ENCODE measurements at regions of chr2 and their contacts with region 1.

Region 1: DNA sequence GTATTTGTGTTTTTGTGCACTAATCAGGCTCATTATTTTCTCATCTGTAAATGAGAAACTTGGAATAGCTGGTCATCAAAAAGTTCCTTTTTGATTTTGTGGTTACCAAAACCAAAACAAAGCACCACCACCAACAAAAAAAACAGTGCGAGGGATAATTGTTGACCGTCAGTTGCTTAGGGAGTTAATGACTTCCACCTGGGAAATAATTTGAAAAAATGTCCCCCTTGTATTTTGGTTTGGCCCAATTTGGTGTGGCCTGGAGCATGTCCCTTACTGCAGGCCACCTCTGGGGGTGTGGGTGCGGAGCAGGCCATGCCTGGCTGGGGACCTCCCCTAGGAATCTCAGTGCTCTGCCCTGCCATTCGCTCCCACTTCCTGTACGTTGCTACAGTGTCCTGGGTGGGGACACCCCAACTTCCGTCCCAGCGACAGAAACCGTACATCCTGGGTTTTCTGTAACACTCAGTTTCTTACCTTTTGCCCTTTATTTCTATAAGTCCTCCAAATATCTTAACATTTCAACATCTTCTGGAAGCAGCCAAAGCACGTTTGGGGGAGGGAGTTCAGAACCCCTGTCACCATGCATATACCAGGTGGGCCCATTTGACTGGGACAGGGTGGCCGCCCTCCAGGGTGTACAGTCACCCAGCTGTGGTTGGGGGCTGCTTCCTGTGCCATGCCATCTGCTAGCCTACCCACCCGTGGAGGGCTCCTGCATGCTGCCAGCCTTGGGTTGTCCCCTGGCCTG is 31.3 kb downstream of the NCK2 start:
- DNase-seq: no peak
- H3K4me3 Mint-ChIP-seq: peak overlapping the region; percentile 55
- H3K27ac Mint-ChIP-seq: peak overlapping the region; percentile 81
- H3K4me1 Mint-ChIP-seq: peaks cover 90% of the 10 kb centered on the region
- H3K27me3 Mint-ChIP-seq: no peaks in the 10 kb centered on the region

Region 2: DNA sequence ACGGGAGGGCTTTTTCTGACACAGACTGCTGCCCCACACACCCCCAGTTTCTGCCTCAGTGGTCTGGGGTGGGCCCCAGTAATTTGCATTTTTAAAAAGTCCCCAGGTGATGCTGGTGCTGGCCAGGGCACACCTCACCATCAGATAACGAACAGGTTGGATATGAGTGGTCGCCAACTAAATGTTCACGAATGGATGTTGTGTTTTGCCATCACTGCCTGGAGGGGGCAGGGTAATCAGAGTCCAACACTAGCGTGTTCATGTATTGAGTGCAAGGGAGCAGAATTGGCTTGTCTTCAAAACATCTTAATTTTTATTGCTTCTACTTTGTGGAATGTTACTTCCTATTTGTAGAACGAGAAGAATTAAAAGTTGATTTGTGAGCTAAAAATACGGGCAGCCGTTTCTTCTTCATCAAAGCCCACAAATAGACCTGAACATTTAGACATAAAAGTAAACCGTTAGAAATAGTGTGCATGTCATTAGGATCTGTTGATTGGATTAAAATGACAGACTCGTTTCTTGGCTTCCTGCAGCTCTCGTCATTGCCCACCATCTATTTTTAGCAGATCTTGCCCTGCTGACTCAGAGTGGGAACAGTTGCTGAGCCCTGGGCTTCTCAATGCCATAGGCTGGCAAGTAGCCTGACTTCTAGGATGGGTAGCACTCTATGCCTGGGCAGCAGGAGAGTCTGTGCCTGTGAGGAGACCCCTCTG is 13.9 kb after region 1 on chr2:
- intact Hi-C with region 1: loop called (anchors 1 kb)
- DNase-seq: peak; percentile 66
- H3K4me3 Mint-ChIP-seq: peak overlapping the region; percentile 66
- H3K27ac Mint-ChIP-seq: peak overlapping the region; percentile 92
- H3K4me1 Mint-ChIP-seq: peaks cover 85% of the 10 kb centered on the region
- H3K27me3 Mint-ChIP-seq: no peaks in the 10 kb centered on the region

Measured in activated T-helper 1 cell treated with anti-CD3 and anti-CD28 coated beads, Interleukin-12 subunit alpha, Interleukin-12 subunit beta, Interleukin-2, Interleukin-4 antibody, amounts not matched to agents 30 ng/mL and 10 ng/mL and 1 ng/mL, durations not matched to agents 14 hours and 24 hours and 36 hours (primary cell).